ENCODE measurements at regions of chr1 and their contacts with region 1.

Region 1: DNA sequence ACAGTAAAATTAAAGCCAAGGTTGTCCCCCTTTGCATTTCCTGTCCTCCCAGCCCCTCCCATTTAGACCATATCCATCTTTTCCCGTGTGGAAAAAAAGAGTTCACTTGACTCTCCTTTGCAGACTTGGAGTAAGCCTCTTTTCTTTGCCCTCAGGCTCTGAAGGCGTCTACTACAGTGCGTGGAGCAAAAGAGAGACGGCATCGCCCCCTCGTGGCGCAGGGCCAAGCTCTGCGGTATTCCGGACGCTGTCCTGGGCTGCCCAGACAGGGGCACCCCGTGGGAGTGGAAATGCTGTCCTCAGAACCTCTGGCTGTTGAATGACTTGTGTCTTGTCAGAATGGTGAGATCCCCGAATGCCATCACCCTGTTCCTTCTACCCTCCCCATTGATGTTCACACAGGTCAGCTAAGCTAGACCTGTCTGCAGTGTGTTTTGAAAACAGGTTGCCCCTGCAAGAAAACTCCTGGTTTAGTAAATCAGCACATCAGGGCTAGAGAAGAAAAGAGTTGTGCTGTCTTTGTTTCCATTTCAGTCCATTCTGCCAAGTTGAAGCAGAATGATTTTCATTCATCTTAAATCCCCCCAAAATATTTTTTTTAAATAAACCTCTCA is 12.3 kb upstream of the GJA8 start:
- DNase-seq: peak; percentile 48
- ATAC-seq: peak; percentile 97
- H3K4me3 ChIP-seq: no peak overlapping the region
- H3K27ac ChIP-seq: no peak overlapping the region
- H3K4me1 ChIP-seq: peaks cover 3 to 6% of the 10 kb centered on the region in 2 experiments; a peak in 2 of 4 replicates
- H3K27me3 ChIP-seq: no peaks in the 10 kb centered on the region
- CTCF ChIP-seq: peak; percentile 68 to 84 (median 81)
- POLR2A ChIP-seq: no peak
- RAD21 ChIP-seq: peak; percentile 92

Region 2: GRCh38 chr1:147273409-147274336 is 616.6 kb before region 1 on chr1:
- CTCF ChIA-PET with region 1: interaction called, 6 read pairs
- POLR2A ChIA-PET with region 1: no interaction called
- RAD21 ChIA-PET with region 1: no interaction called
- intact Hi-C with region 1: loop called (anchors 2 kb)
- DNase-seq: peak; percentile 29
- ATAC-seq: peak; percentile 73
- H3K4me3 ChIP-seq: no peak overlapping the region
- H3K27ac ChIP-seq: no peak overlapping the region
- H3K4me1 ChIP-seq: peaks cover 2 to 9% of the 10 kb centered on the region in 2 experiments; a peak in 2 of 4 replicates
- H3K27me3 ChIP-seq: no peaks in the 10 kb centered on the region
- CTCF ChIP-seq: peak; percentile 25 to 63 (median 37); a peak in 5 of 6 replicates
- POLR2A ChIP-seq: no peak
- RAD21 ChIP-seq: peak; percentile 61

Region 3: DNA sequence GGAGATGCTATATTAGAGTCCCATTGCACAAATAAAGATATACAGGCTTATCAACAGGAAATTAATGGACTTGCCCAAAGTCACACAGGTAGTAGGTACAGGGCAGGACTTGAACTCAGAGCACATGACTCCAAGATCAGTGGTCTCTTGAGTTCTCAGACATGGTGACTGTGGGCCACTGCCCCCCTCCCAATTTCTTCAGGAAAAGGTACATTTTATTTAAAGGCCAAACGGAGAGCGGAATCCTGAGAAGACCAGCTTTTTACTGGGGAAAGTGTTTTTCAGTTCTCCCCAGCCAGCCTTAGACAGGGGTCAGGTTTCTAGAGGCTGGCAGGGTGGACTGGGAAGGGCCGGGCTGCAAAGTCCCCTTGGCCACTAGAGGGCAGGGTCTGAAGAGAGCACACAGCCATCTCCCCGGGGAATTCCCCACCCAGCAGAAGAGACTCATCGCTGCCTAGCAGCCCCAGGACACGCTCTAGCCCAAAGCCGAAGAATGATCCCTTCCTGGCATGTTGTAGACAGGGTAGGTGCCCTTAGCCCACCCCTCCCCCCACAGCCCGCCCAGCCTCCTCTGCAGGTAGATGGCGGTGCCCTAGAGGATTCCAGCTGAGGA is 249.6 kb before region 1 on chr1:
- CTCF ChIA-PET with region 1: interaction called, 14 read pairs
- POLR2A ChIA-PET with region 1: no interaction called
- RAD21 ChIA-PET with region 1: no interaction called
- intact Hi-C with region 1: loop called (anchors 1 kb)
- DNase-seq: peak; percentile 44
- ATAC-seq: peak; percentile 99
- H3K4me3 ChIP-seq: no peak overlapping the region
- H3K27ac ChIP-seq: no peak overlapping the region
- H3K4me1 ChIP-seq: peaks cover 0 to 11% of the 10 kb centered on the region in 2 experiments; a peak in 1 of 4 replicates
- H3K27me3 ChIP-seq: no peaks in the 10 kb centered on the region
- CTCF ChIP-seq: peak; percentile 58 to 96 (median 84)
- POLR2A ChIP-seq: no peak
- RAD21 ChIP-seq: peak; percentile 50; the same call in 1 of the 2 replicates

Region 4: DNA sequence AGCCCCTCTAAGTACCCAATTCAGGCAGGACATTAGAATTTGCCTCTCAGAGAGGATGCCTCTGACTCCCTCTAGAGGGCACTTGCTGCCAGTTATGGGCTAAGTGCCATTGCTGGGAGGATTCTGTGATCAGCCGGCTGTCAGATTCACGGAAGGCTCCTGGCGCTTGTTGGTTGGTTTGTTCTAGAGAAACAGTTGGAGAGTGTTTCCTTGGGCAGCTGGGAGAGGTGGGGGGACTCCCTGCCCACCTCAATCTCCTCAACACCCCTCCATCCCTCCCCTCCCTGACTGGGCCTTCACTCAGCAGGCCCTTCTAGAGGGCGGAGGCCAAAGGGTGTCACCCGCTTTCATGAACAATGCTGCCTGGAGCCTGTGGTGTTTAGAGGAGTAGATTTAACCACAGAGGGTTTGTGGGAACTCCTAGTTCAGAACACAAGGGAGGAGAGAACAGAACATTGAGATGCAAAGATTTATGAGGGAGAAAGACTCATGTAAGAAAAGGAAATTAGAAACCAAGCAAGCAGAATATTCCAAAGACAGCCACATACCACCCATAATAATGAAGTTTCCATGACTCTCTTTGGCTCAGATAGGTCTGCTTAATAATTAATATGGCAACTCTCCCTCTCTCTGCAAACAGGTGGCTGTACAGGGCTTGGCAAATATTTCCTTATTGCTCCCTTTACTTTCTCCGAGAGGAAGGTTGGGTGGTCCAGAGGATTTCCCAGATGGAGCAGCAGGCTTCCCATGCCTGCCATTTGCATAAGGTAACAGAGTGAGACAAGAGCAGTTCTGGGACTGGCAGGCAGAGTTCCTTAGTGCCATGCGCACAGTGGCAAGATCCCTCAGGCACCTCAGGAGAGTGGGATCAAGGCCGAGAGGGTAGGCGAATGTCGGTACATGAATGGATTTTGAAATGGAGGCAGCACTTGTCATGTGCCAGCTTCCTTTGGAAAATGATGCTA is 190.0 kb before region 1 on chr1:
- CTCF ChIA-PET with region 1: interaction called, 4 read pairs
- POLR2A ChIA-PET with region 1: no interaction called
- RAD21 ChIA-PET with region 1: no interaction called
- intact Hi-C with region 1: loop called (anchors 5 kb)
- DNase-seq: peak; percentile 36
- ATAC-seq: peak; percentile 95
- H3K4me3 ChIP-seq: no peak overlapping the region
- H3K27ac ChIP-seq: no peak overlapping the region
- H3K4me1 ChIP-seq: peaks cover 0 to 4% of the 10 kb centered on the region in 2 experiments; a peak in 2 of 4 replicates
- H3K27me3 ChIP-seq: no peaks in the 10 kb centered on the region
- CTCF ChIP-seq: peak; percentile 67 to 98 (median 90); a peak in 5 of 6 replicates
- POLR2A ChIP-seq: no peak
- RAD21 ChIP-seq: peak; percentile 75

Region 5: GRCh38 chr1:147723691-147724323 is 166.5 kb before region 1 on chr1:
- CTCF ChIA-PET with region 1: interaction called, 41 read pairs
- POLR2A ChIA-PET with region 1: no interaction called
- RAD21 ChIA-PET with region 1: interaction called in 1 of 2 experiments, 4 read pairs
- intact Hi-C with region 1: loop called (anchors 1 kb)
- DNase-seq: peak; percentile 28
- ATAC-seq: peak; percentile 92
- H3K4me3 ChIP-seq: no peak overlapping the region
- H3K27ac ChIP-seq: no peak overlapping the region
- H3K4me1 ChIP-seq: no peaks in the 10 kb centered on the region
- H3K27me3 ChIP-seq: no peaks in the 10 kb centered on the region
- CTCF ChIP-seq: peak; percentile 62 to 73 (median 68)
- POLR2A ChIP-seq: no peak
- RAD21 ChIP-seq: peak; percentile 88

Region 6: DNA sequence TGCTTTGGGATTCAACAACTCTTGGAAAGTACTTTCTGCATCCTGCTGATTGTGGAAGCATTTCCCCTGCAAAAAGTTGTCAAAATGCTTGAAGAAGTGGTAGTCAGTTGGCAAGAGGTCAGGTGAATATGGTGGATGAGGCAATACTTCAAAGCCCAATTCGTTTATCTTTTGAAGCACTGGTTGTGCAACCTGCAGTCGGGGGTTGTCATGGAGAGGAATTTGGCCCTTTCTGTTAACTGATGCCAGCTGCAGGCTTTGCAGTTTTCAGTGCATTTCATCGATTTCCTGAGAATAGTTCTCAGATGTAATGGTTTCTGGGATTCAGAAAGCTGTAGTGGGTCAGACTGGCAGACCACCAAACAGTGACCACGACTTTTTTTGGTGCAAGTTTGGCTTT is 82.3 kb before region 1 on chr1:
- CTCF ChIA-PET with region 1: no interaction called
- POLR2A ChIA-PET with region 1: no interaction called
- RAD21 ChIA-PET with region 1: no interaction called
- intact Hi-C with region 1: no loop called
- DNase-seq: no peak
- ATAC-seq: no peak
- H3K4me3 ChIP-seq: no peak overlapping the region
- H3K27ac ChIP-seq: no peak overlapping the region
- H3K4me1 ChIP-seq: no peaks in the 10 kb centered on the region
- H3K27me3 ChIP-seq: no peaks in the 10 kb centered on the region
- CTCF ChIP-seq: no peak
- POLR2A ChIP-seq: no peak
- RAD21 ChIP-seq: no peak

Measured in HCT116 (cell line).